Activated CD4-positive, alpha-beta memory T cell treated with anti-CD3 and anti-CD28 coated beads for 36 hours (primary cell): ENCODE measurements at regions of chr11 and their contacts with region 1.

Region 1: GRCh38 chr11:35337136-35337918 is 82.0 kb downstream of the SLC1A2 start:
- DNase-seq: peak; percentile 35
- H3K4me3 Mint-ChIP-seq: no peak overlapping the region
- H3K27ac Mint-ChIP-seq: peak overlapping the region; percentile 56
- H3K4me1 Mint-ChIP-seq: peaks cover 40% of the 10 kb centered on the region
- H3K27me3 Mint-ChIP-seq: peaks cover 2% of the 10 kb centered on the region

Region 2: GRCh38 chr11:35272391-35272902 is 64.9 kb before region 1 on chr11:
- CTCF ChIA-PET with region 1: no interaction called
- POLR2A ChIA-PET with region 1: interaction called, 3 read pairs
- intact Hi-C with region 1: loop called (anchors 1 kb)
- DNase-seq: peak; percentile 74
- H3K4me3 Mint-ChIP-seq: peak overlapping the region; percentile 38
- H3K27ac Mint-ChIP-seq: peak overlapping the region; percentile 80
- H3K4me1 Mint-ChIP-seq: peaks cover 44% of the 10 kb centered on the region
- H3K27me3 Mint-ChIP-seq: peaks cover 4% of the 10 kb centered on the region

Region 3: GRCh38 chr11:35288817-35289541 is 48.3 kb before region 1 on chr11:
- CTCF ChIA-PET with region 1: no interaction called
- POLR2A ChIA-PET with region 1: no interaction called
- intact Hi-C with region 1: loop called (anchors 5 kb)
- DNase-seq: no peak
- H3K4me3 Mint-ChIP-seq: no peak overlapping the region
- H3K27ac Mint-ChIP-seq: no peak overlapping the region
- H3K4me1 Mint-ChIP-seq: peaks cover 21% of the 10 kb centered on the region
- H3K27me3 Mint-ChIP-seq: no peaks in the 10 kb centered on the region

Region 4: GRCh38 chr11:35305670-35306382 is 31.5 kb before region 1 on chr11:
- CTCF ChIA-PET with region 1: no interaction called
- POLR2A ChIA-PET with region 1: no interaction called
- intact Hi-C with region 1: loop called (anchors 1 kb)
- DNase-seq: peak; percentile 35
- H3K4me3 Mint-ChIP-seq: no peak overlapping the region
- H3K27ac Mint-ChIP-seq: no peak overlapping the region
- H3K4me1 Mint-ChIP-seq: peaks cover 19% of the 10 kb centered on the region
- H3K27me3 Mint-ChIP-seq: no peaks in the 10 kb centered on the region